ENCODE measurements at regions of chr1 and their contacts with region 1.

Region 1: DNA sequence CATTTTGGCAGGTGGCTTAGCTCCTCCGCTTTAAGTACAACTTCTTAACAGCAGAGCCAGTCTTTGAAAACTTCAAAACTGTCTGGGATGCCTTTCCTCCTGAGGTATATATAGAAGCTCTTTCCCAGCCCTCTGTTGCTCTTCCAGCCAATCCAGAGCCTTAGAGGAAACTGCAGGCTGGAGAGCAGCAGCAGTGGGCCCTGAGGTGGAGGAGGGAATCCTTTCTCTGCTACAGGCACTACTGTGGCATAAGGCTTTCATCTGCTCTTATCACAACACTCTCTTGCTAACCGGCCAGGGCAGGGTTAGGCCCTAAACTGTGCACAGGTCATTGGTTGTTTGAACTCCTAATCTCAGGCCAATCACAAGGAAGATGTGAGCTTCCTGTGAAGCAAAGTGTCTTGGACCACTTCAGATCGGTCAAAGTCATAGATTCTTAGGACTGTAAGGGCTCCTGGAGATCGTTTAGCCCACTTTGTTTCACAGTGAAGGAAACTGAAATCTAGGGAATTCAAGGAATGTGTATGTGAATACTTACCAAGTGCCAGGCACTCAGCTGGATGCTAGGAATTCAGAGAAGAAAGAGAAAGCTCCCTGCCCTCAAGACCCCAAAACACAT is at the start of gene RGS5:
- DNase-seq: peak in 1 of 7 donors; percentile 78
- H3K4me3 ChIP-seq: peak within 1 kb of the TSS in 1 of 4 donors; percentile 3
- H3K27ac ChIP-seq: peak within 1 kb of the TSS in 1 of 5 donors; percentile 19
- H3K4me1 ChIP-seq: no peaks in the 10 kb centered on the region
- H3K27me3 ChIP-seq: no peaks in the 10 kb centered on the region
- CTCF ChIP-seq: no peak
- POLR2A ChIP-seq: peak; percentile 7 to 62
- total RNA-seq, gene RGS5: 82.9 to 472 (median 153) TPM

Region 2: DNA sequence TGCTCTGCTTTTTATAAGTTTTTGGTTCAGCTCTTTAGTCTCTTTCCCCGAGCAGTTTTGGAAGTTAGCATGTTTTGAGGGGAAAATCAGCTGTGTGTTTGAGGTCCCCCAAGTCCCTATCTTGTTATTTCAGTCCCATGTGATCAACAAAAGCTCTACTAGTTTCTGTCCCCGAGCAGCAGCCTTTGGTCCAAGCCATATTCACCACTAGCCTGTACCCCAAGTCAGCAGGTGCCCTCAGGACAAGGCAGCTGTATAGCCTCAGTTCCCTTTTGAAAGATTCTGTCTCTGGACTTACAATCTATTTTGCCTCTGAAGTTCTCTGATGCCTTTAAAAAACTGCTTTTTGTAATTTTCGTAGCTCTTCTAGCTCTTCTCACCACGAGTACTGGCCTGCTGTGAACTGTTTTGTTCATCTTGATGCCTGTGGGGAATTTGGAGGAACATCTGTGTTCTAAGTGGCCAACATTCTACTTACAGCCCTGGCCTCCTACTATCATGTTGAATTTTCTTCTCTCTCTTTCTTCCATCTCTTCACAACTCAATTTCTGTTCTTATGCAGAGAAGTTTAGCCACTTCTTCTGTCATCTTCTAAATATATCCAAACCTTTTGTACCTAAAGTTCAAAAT is 624.8 kb before region 1 on chr1:
- intact Hi-C with region 1: no loop called
- DNase-seq: no peak
- H3K4me3 ChIP-seq: no peak overlapping the region
- H3K27ac ChIP-seq: no peak overlapping the region
- H3K4me1 ChIP-seq: peaks cover 5 to 12% of the 10 kb centered on the region in 2 donors
- H3K27me3 ChIP-seq: no peaks in the 10 kb centered on the region
- CTCF ChIP-seq: no peak
- POLR2A ChIP-seq: no peak

Region 3: GRCh38 chr1:162930976-162931560 is 271.9 kb before region 1 on chr1:
- intact Hi-C with region 1: no loop called
- DNase-seq: no peak
- H3K4me3 ChIP-seq: no peak overlapping the region
- H3K27ac ChIP-seq: no peak overlapping the region
- H3K4me1 ChIP-seq: peaks cover 0 to 5% of the 10 kb centered on the region in 2 donors
- H3K27me3 ChIP-seq: no peaks in the 10 kb centered on the region
- CTCF ChIP-seq: no peak
- POLR2A ChIP-seq: no peak

Region 4: DNA sequence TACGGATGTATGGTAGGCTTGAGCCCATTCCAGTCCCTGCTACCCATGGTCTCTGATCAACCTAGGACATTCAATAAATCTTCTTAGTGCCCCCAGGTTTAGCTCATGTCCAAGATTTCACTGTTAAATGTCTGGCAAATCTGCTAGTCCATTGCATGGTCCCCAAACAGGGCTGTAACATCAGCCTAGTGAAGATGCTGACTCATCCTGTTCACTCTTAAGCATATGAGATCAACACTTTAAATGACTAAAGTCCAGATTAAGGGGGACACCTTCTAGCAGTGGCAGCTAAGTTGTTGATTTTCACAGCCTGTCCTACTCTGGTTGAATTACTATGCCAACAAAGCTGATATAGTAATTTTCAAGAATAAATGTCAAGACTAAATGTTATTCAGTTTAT is 72.3 kb after region 1 on chr1:
- intact Hi-C with region 1: loop called in 1 of 2 experiments (anchors 10 kb)
- DNase-seq: no peak
- H3K4me3 ChIP-seq: no peak overlapping the region
- H3K27ac ChIP-seq: no peak overlapping the region
- H3K4me1 ChIP-seq: no peaks in the 10 kb centered on the region
- H3K27me3 ChIP-seq: no peaks in the 10 kb centered on the region
- CTCF ChIP-seq: no peak
- POLR2A ChIP-seq: no peak